GM13976 (cell line): ENCODE measurements at regions of chr1 and their contacts with region 1.

Region 1: GRCh38 chr1:89524369-89525168 is at the start of gene LRRC8B:
- DNase-seq: peak; percentile 90
- CTCF ChIP-seq: no peak

Region 2: DNA sequence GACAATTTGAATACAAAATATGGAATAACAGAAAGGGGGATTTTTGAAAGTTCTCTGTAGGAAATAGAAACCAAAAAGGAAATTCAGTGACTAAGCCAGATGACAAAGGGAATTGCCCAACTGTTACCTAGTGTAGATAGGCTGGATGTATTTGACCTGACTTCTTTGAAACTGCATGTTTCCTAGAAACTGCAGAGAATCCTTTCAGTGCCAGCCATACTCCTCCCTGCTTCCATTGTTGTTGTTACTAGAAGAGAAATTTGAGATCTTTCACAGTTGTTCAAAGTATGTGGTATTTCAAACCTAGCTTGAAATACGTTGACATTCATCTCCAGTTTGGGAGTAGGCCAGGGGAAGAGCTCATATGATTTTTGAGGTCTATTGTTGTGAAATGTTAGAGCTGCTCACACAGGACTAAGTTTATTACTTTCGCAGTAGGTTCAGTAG is 250.1 kb before region 1 on chr1:
- in situ Hi-C with region 1: no loop called
- DNase-seq: no peak
- CTCF ChIP-seq: no peak

Region 3: DNA sequence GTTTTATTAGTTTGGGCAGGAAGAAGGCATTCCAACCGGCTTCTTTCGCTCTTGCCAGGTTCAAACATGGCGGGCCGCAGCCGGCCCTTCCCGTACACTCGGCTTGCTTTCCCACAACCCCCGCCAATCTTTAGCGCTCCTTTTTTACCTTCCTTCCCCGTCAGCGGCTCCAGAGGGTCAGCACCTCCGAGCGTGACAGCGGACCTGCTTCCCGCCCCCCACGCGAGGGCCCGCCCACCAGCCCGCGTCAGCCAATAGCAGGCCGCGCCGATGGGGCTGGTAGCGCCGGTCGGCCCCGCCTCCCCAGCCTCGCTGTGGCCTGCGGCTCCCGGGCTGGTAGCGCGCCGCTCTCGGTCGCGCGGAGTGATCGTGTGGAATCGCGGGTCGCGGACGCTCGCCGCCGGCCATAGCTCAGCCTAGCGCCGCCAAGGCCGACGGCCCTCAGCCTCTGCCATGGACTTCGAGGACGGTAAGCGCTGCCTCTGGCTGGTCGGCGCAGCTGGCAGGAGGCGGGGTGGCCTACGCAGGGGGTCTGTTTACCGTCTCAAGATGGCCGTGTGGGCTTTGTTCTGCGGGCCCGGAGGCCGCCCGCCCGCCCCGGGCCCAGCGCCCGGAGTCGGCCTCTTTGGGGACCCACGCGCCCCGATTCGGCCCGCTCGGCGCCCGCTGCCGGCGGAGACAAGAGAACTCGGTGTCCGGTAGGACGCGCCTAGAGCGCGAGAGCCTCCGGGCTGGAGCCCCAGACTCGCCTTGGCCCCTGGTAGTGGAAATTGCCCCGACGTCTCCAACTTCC is 470.4 kb after region 1 on chr1 and contains the start of gene ZNF326:
- in situ Hi-C with region 1: loop called (anchors 25 kb)
- DNase-seq: peak; percentile 100
- CTCF ChIP-seq: peak; percentile 13

Region 4: GRCh38 chr1:90045853-90046563 is 521.4 kb after region 1 on chr1:
- in situ Hi-C with region 1: no loop called
- DNase-seq: no peak
- CTCF ChIP-seq: no peak